ENCODE measurements at regions of chr19 and their contacts with region 1.

Region 1: GRCh38 chr19:40139533-40140287 is 49.0 kb upstream of the ZNF780A start:
- DNase-seq: peak; percentile 36 to 63 (median 53)
- H3K4me3 ChIP-seq: no peak overlapping the region
- H3K4me3 Mint-ChIP-seq: no peak overlapping the region
- H3K27ac ChIP-seq: no peak overlapping the region
- H3K27ac Mint-ChIP-seq: no peak overlapping the region
- H3K4me1 ChIP-seq: peaks cover 16 to 17% of the 10 kb centered on the region in 2 donors
- H3K4me1 Mint-ChIP-seq: peaks cover 19% of the 10 kb centered on the region
- H3K27me3 ChIP-seq: peaks cover 2 to 14% of the 10 kb centered on the region in 2 donors
- H3K27me3 Mint-ChIP-seq: peaks cover 9 to 12% (median 10%) of the 10 kb centered on the region in 3 donors
- CTCF ChIP-seq: peak; percentile 76

Region 2: GRCh38 chr19:40221858-40222837 is 82.4 kb after region 1 on chr19:
- intact Hi-C with region 1: loop called (anchors 1 to 5 kb)
- DNase-seq: peak; percentile 75 to 84 (median 83)
- H3K4me3 ChIP-seq: no peak overlapping the region
- H3K4me3 Mint-ChIP-seq: peak overlapping the region in 1 of 2 donors; percentile 69
- H3K27ac ChIP-seq: no peak overlapping the region
- H3K27ac Mint-ChIP-seq: peak overlapping the region in 1 of 7 donors; percentile 41
- H3K4me1 ChIP-seq: no peaks in the 10 kb centered on the region
- H3K4me1 Mint-ChIP-seq: peaks cover 15% of the 10 kb centered on the region
- H3K27me3 ChIP-seq: peaks cover 52 to 80% of the 10 kb centered on the region in 2 donors
- H3K27me3 Mint-ChIP-seq: peaks cover 86 to 94% (median 94%) of the 10 kb centered on the region in 3 donors
- CTCF ChIP-seq: peak; percentile 82

Region 3: GRCh38 chr19:40285353-40286234 is 145.9 kb after region 1 on chr19:
- intact Hi-C with region 1: loop called in 1 of 2 experiments (anchors 10 kb)
- DNase-seq: peak; percentile 100
- H3K4me3 ChIP-seq: peak overlapping the region; percentile 64 to 87 (median 77)
- H3K4me3 Mint-ChIP-seq: peak overlapping the region; percentile 94 to 95
- H3K27ac ChIP-seq: peak overlapping the region; percentile 89 to 96
- H3K27ac Mint-ChIP-seq: peak overlapping the region; percentile 99 to 100 (median 100)
- H3K4me1 ChIP-seq: peaks cover 20 to 26% of the 10 kb centered on the region in 2 donors
- H3K4me1 Mint-ChIP-seq: peaks cover 31% of the 10 kb centered on the region
- H3K27me3 ChIP-seq: no peaks in the 10 kb centered on the region
- H3K27me3 Mint-ChIP-seq: peaks cover 0 to 2% (median 2%) of the 10 kb centered on the region in 3 donors
- CTCF ChIP-seq: no peak

Region 4: DNA sequence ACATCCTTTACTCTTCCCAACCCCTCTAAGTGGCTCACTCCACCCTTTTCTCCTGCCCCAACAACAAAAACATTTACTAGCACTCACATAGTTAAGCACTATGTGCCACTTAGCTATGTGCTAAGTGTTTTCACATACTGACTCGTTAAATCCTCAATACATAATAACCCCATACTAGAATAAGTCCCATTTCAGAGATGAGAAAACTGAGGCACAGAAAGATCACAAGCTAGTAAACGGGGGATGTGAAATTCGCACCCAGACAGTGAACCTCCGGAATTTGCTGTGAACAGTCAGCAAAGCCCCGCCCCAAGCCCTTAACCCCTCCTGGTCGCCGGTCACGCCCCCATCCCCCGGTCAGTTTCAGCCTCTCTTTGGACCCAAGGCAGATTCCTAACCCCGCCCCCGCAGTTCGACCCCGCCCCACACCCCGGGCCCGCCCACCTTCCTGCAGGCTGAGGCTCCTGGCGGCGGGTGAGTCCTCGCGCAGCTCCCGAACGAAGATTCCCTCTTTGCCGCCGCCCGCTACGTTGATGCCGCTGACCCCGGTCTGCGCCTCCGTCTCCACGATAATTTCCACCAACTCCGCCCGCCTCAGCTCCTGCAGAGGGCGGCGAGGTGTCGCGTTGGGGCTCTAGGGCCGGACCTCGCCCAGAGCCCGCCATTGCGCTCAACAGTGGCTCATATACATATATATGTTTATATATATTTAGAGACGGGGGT is 263.7 kb after region 1 on chr19:
- intact Hi-C with region 1: no loop called
- DNase-seq: peak; percentile 71 to 87 (median 81)
- H3K4me3 ChIP-seq: peak overlapping the region; percentile 27 to 82 (median 76)
- H3K4me3 Mint-ChIP-seq: peak overlapping the region; percentile 89 to 99
- H3K27ac ChIP-seq: peak overlapping the region; percentile 48 to 67
- H3K27ac Mint-ChIP-seq: peak overlapping the region; percentile 77 to 97 (median 85)
- H3K4me1 ChIP-seq: peaks cover 23 to 31% of the 10 kb centered on the region in 2 donors
- H3K4me1 Mint-ChIP-seq: peaks cover 27% of the 10 kb centered on the region
- H3K27me3 ChIP-seq: no peaks in the 10 kb centered on the region
- H3K27me3 Mint-ChIP-seq: peaks cover 2 to 12% (median 2%) of the 10 kb centered on the region in 3 donors
- CTCF ChIP-seq: no peak

Measured in CD14-positive monocyte (primary cell).